ENCODE measurements at regions of chr7 and their contacts with region 1.

Region 1: GRCh38 chr7:90211391-90212148 is at the start of gene STEAP2:
- DNase-seq: peak; percentile 77 to 93
- H3K4me3 ChIP-seq: peak within 1 kb of the TSS; percentile 94
- H3K27ac ChIP-seq: peak within 1 kb of the TSS; percentile 31; the same call in 1 of the 2 replicates
- H3K4me1 ChIP-seq: peaks cover 9% of the 10 kb centered on the region
- H3K27me3 ChIP-seq: no peaks in the 10 kb centered on the region
- CTCF ChIP-seq: peak; percentile 65
- total RNA-seq, gene STEAP2: 10.1 and 10.4 TPM in 2 replicates

Region 2: GRCh38 chr7:90178679-90179278 is 32.8 kb before region 1 on chr7:
- CTCF ChIA-PET with region 1: interaction called, 14 read pairs
- POLR2A ChIA-PET with region 1: interaction called, 6 read pairs
- intact Hi-C with region 1: loop called (anchors 2 kb)
- DNase-seq: peak; percentile 53 to 87
- H3K4me3 ChIP-seq: peak overlapping the region; percentile 17; the same call in 1 of the 2 replicates
- H3K27ac ChIP-seq: peak overlapping the region; percentile 93
- H3K4me1 ChIP-seq: peaks cover 42% of the 10 kb centered on the region
- H3K27me3 ChIP-seq: no peaks in the 10 kb centered on the region
- CTCF ChIP-seq: no peak

Region 3: DNA sequence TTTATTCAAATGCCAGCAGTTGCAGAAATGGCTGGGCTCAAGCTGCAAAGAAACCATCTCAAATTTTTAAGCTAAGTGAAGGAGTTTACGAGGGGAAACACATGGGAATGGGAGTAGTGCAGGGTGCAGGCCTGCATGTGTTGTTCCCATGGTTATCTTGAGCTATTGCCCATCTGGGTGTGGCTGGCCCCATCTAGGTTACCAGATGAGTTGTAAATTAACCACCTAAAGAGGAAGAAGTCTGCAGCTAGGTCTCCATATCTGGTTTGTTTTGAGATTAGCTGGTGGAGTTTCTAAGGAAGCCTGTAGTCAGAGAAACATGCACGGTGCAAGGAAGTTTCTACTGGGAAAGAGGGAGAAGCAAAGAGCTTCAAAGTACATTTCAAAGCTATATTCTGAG is 23.3 kb before region 1 on chr7:
- CTCF ChIA-PET with region 1: interaction called, 20 read pairs
- POLR2A ChIA-PET with region 1: interaction called, 5 read pairs
- intact Hi-C with region 1: no loop called
- DNase-seq: no peak
- H3K4me3 ChIP-seq: no peak overlapping the region
- H3K27ac ChIP-seq: no peak overlapping the region
- H3K4me1 ChIP-seq: no peaks in the 10 kb centered on the region
- H3K27me3 ChIP-seq: no peaks in the 10 kb centered on the region
- CTCF ChIP-seq: no peak

Region 4: DNA sequence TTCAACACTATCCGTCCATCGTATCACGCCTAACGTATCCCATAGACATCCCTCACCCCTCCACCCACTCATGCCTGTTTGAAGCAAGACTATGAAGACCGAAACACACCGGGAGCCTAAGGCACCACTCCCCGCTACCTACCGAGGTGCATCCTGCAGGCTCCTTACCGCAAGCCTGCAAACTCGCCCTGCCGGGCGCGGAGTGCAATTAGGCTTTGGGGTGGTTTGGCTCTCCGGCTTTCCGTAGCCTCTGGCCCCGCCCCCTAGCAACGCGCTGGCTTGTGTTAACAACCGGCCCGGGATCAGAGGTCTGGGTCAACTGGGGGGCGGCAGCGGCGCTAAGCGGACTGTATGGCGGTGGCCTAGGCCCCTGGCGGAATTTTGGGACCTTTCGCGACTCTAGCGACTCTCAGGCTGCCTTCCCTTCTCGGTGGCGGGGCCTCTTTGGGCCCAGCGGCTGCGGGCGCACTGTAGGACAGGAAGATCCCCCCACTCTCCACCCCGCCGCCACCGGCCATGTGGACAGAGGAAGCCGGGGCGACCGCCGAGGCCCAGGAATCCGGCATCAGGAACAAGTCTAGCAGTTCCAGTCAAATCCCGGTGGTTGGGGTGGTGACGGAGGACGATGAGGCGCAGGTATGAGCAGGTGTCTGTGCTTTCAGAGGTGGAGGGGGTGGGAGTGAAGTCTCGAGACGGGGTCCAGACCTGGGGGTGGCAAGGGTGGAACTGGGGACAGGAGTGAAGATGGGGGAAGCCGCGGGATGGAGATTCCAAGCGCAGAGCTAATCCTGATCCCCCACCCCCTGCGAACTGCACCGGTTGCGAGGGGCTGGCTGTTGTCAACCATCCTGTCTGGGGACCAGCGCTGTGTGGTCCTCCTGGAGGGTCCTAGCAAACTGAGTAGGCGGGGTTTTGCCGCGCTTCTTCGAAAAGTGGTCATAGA is 33.6 kb after region 1 on chr7 and contains the start of gene CFAP69:
- CTCF ChIA-PET with region 1: no interaction called
- POLR2A ChIA-PET with region 1: no interaction called
- intact Hi-C with region 1: loop called (anchors 2 kb)
- DNase-seq: peak; percentile 76 to 95
- H3K4me3 ChIP-seq: peak within 1 kb of the TSS; percentile 76
- H3K27ac ChIP-seq: no peak within 1 kb of the TSS
- H3K4me1 ChIP-seq: peaks cover 22% of the 10 kb centered on the region
- H3K27me3 ChIP-seq: no peaks in the 10 kb centered on the region
- CTCF ChIP-seq: 0 out of 2 replicates have a peak, but pooled peaks have one; percentile 18
- total RNA-seq, gene CFAP69: 15.0 and 18.5 TPM in 2 replicates